Left cardiac atrium (tissue), 4 donors: ENCODE measurements at regions of chr5 and their contacts with region 1.

Region 1: DNA sequence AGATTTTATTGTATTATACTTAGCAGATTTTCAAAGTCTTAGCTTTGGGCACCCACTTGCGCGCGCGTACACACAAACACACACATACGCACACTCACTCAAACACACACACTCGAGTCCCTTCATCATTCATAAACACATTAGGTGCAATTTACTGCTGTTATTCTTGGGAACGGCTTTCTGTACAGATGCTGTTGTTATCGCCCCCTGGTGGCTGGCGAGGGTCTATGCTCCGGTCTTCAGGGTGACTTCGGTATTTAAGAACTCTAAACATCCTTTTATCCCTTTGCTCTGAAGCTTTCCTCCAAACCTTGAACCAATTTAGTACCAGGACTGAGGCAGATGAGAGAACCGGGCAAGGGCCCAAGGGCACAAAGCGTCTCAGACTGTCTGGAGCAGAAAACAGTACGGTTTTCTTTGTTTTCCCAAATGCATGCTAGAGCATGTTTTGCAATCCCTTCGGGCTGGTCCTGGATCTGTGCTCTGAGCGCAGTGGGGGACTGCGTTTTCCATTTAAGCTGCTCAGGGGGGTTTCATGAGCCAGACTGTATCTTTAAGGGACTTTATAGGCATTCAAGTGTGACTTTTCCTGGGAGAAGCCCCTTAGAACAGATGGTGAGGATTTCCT is 1.7 kb upstream of the SLIT3 start:
- DNase-seq: peak; percentile 75
- ATAC-seq: peak in 1 of 2 donors; percentile 28

Region 2: DNA sequence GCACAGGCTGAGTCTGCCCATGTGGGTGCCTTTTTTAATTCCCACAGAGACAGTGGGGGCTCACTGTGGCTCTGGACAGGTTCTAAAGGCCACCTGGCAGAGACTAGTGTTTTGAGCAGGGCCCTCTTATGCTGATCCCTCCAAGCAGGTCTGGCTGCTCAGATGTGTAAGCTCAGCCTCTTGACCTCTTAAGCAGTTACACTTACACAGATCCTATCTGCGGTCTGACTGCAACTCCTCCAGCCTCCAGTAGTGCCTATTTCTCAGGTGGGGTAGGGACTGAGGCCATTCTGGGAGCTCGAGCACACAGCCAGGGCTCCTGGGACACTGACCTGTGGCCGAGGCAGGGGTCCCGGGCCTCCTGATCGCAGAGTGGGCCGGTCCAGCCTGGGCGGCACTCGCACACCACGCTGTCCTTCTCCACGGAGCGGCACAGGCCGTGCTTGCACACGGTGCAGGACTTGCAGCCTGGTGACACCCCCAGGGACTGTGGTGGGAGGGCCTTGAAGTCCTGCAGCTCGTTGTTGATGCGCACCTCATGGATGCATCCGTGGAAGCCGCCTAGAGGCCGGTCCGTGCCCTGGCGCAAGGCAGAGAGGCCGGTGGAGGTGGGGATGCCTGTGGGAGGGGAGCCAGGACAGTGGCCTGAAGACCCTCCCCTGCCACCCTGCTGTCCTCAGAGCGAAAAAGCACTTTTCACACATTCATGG is 631.6 kb before region 1 on chr5:
- intact Hi-C with region 1: loop called in 1 of 2 experiments (anchors 5 kb)
- DNase-seq: no peak
- ATAC-seq: no peak

Region 3: GRCh38 chr5:169548315-169548714 is 245.7 kb after region 1 on chr5:
- intact Hi-C with region 1: loop called in 1 of 2 experiments (anchors 10 kb)
- DNase-seq: no peak
- ATAC-seq: peak; percentile 92 to 94

Region 4: DNA sequence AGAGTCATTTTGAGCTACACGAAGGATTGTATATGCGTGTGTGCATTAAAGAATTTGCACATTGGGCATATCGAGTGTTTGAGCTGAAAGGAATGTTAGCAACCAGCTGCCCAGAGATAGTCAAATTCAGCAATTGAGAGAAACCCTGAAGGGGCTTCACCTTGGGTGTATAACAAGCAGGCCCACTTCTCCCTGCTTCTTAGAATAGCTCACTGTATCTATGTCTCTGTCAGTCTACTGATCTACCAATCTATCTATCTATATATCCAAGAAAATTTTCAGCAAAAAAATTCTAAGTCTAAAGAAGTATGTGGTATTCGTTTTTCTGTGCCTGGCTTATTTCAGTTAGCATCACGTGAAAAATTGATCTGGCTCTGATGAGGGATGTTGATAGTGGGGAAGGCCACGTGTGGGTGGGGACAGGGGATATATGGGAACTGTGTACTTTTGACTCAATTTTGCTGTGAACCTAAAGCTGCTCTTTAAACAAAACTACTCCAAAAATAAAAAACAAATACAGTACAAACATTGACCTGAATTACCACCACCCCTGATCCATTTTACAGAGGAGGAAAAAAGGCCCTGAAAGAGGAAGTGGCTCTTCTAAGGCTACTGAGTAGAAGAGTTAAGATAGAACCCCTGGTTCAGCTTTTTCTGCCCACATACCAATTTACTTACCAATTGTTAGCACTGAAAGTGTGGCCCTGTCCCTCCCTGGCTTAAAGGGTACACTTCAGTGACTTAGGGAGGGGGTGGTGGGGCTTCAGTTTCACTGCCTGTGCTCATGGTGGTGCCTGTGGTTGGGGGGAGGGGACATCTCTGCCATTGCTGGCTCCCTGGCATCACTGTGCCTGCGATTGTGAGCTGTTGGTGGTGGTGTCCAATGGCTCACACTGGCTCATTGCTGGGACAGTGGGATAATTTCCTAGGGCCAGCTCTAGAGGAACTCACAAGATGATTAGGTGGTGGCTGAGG is 476.3 kb after region 1 on chr5:
- intact Hi-C with region 1: no loop called
- DNase-seq: no peak
- ATAC-seq: no peak